ENCODE measurements at regions of chr7 and their contacts with region 1.

Region 1: GRCh38 chr7:40057292-40057691 is 77.1 kb downstream of the MPLKIP start:
- DNase-seq: no peak
- H3K4me3 Mint-ChIP-seq: no peak overlapping the region
- H3K27ac Mint-ChIP-seq: no peak overlapping the region
- H3K4me1 Mint-ChIP-seq: peaks cover 3% of the 10 kb centered on the region
- H3K27me3 Mint-ChIP-seq: no peaks in the 10 kb centered on the region

Region 2: GRCh38 chr7:39825401-39825980 is 231.8 kb before region 1 on chr7:
- CTCF ChIA-PET with region 1: no interaction called
- DNase-seq: no peak
- H3K4me3 Mint-ChIP-seq: no peak overlapping the region
- H3K27ac Mint-ChIP-seq: no peak overlapping the region
- H3K4me1 Mint-ChIP-seq: peaks cover 3% of the 10 kb centered on the region
- H3K27me3 Mint-ChIP-seq: peaks cover 42% of the 10 kb centered on the region

Region 3: DNA sequence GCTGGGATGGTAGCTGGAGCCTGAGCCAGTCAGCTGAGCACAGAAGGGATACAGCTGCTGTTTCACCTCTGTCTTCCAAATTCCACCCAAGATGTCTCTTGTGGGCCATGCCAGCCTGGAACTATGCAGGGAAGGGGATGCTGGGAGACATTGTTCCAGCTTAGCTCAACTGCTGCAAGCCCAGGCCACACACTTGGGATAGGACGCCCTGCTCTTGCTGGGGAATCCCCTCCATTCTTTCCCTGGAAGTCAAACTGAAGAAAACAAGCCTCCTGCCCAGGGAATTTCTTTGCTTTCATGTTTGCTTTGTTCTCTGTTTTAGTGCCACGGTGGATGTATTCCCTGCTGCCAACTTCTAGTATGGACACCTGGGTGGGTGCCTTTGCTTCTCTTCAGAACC is 162.4 kb before region 1 on chr7:
- CTCF ChIA-PET with region 1: interaction called, 110 read pairs
- DNase-seq: no peak
- H3K4me3 Mint-ChIP-seq: no peak overlapping the region
- H3K27ac Mint-ChIP-seq: no peak overlapping the region
- H3K4me1 Mint-ChIP-seq: no peaks in the 10 kb centered on the region
- H3K27me3 Mint-ChIP-seq: peaks cover 44% of the 10 kb centered on the region

Region 4: DNA sequence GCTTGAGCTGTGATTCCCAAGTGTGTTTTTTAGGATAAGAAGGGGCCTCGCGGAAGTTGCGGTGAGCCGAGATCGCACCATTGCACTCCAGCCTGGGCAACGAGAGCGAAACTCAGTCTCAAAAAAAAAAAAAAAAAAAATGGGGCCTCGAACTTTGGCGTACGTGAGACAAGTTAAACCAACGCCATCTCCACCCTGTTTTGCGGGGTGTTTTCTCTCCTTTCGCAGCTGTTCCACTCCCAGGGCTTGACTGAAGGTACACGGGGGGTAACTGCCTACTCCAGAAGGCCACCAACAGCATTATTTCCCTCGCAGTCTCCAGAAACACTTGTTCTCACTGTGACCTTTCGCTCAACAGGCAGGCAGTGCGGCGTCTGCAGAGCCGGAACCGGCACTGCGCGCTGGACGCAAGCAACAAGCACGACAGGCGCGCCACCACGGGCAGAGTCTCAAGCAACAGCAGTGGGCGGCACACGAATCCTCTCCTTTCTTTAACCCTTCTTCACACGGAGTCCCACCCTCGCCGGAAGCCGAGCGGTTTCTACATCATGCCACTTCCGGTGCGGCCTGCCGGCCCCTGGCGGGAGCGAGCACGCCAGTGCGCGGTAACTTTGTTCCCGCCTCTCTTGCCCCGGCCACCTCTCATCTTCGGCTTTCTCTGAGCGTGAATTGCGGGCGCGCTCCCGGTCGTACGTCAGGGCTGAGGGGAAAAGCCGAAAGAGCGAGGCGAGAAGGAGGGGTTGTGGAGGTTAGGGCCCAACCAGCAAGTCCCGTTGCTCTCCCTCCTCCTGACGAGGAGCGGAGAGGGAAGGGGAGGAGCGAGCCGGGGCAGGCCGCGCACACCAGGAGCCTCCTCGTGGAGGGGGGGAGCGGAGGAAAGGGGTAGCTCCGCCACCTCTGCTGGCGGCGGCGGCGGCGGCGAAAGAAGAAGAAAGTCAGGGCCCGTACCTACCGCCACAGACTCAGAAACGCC is 108.0 kb before region 1 on chr7:
- CTCF ChIA-PET with region 1: interaction called, 23 read pairs
- DNase-seq: peak; percentile 99
- H3K4me3 Mint-ChIP-seq: peak overlapping the region; percentile 91
- H3K27ac Mint-ChIP-seq: peak overlapping the region; percentile 100
- H3K4me1 Mint-ChIP-seq: peaks cover 41% of the 10 kb centered on the region
- H3K27me3 Mint-ChIP-seq: peaks cover 15% of the 10 kb centered on the region